Heart left ventricle (tissue), 16 donors: ENCODE measurements at regions of chr17 and their contacts with region 1.

Region 1: GRCh38 chr17:41013606-41014005 is 4.7 kb upstream of the KRTAP3-1 start:
- DNase-seq: no peak
- ATAC-seq: peak in 1 of 4 donors; percentile 62
- H3K4me3 ChIP-seq: no peak overlapping the region
- H3K27ac ChIP-seq: no peak overlapping the region
- H3K4me1 ChIP-seq: peaks cover 0 to 9% (median 0%) of the 10 kb centered on the region in 12 donors
- H3K27me3 ChIP-seq: peaks cover 0 to 4% (median 0%) of the 10 kb centered on the region in 9 donors
- CTCF ChIP-seq: no peak
- POLR2A ChIP-seq: no peak

Region 2: GRCh38 chr17:40818733-40819527 is 194.7 kb before region 1 on chr17:
- intact Hi-C with region 1: no loop called
- DNase-seq: peak; percentile 83 to 92 (median 85)
- ATAC-seq: peak; percentile 85 to 96 (median 92)
- H3K4me3 ChIP-seq: peak overlapping the region; percentile 52 to 95 (median 66)
- H3K27ac ChIP-seq: peak overlapping the region; percentile 82 to 97 (median 93)
- H3K4me1 ChIP-seq: peaks cover 0 to 31% (median 14%) of the 10 kb centered on the region in 12 donors
- H3K27me3 ChIP-seq: no peaks in the 10 kb centered on the region
- CTCF ChIP-seq: no peak
- POLR2A ChIP-seq: peak in 1 of 2 donors; percentile 71

Region 3: DNA sequence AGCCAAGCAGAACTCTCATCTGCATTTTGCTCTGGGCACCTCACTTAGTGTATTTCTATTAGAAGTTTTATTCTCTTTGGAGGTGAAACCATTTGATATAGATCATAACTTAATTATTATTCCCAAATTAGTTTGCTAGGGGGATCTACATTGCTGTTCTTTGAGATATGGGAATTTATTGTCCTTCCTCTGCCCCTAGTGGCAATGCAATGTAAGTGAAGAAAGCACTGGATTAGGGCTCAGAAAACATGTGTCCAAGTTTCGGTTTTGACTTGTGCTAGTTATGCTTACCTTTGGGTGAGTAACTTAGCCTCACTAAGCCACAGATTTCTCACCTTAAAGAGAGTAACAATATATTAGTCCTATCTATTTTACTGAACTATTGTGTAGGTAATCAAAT is 49.8 kb before region 1 on chr17:
- intact Hi-C with region 1: loop called in 1 of 10 experiments (anchors 5 kb)
- DNase-seq: no peak
- ATAC-seq: no peak
- H3K4me3 ChIP-seq: no peak overlapping the region
- H3K27ac ChIP-seq: no peak overlapping the region
- H3K4me1 ChIP-seq: no peaks in the 10 kb centered on the region
- H3K27me3 ChIP-seq: peaks cover 0 to 6% (median 0%) of the 10 kb centered on the region in 9 donors
- CTCF ChIP-seq: peak; percentile 20 to 67 (median 48)
- POLR2A ChIP-seq: no peak